GM13976 (cell line): ENCODE measurements at regions of chr5 and their contacts with region 1.

Region 1: GRCh38 chr5:178279725-178280438 is 47.3 kb upstream of the PHYKPL start:
- DNase-seq: peak; percentile 93
- CTCF ChIP-seq: peak; percentile 95

Region 2: GRCh38 chr5:178551059-178551458 is 271.2 kb after region 1 on chr5:
- in situ Hi-C with region 1: loop called (anchors 10 kb)
- DNase-seq: no peak
- CTCF ChIP-seq: peak; percentile 29

Region 3: GRCh38 chr5:179495906-179496455 is 1216.1 kb after region 1 on chr5:
- in situ Hi-C with region 1: loop called (anchors 25 kb)
- DNase-seq: no peak
- CTCF ChIP-seq: peak; percentile 16